Activated naive CD8-positive, alpha-beta T cell treated with anti-CD3 and anti-CD28 coated beads, Interleukin-2, amount 10 ng/mL, durations not matched to agents 7 days and 5 days (primary cell): ENCODE measurements at regions of chr11 and their contacts with region 1.

Region 1: DNA sequence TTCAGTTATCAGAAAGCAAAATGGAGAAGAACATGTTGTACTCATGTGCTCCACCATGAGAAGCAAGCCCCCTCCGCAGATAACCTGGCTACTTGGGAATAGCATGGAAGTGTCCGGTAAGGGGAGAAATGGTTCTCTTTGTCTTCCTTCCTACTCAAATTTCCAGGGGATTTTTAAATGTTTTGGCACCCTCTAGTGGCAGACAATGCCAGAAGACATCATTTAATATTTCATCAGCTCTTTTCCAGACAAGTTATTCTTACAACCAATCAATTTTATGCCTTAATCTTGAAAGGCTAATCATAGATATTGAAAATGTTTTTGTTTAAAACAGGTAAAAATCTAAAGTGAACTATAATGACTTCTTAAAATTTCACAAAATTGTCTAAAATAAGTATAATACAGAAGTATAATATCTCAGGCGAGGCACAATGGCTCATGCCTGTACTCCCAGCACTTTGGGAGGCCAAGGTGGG is 15.7 kb downstream of the CRTAM start:
- DNase-seq: no peak
- ATAC-seq: no peak
- H3K4me3 Mint-ChIP-seq: no peak overlapping the region
- H3K27ac Mint-ChIP-seq: no peak overlapping the region
- H3K4me1 Mint-ChIP-seq: peaks cover 44% of the 10 kb centered on the region
- H3K27me3 Mint-ChIP-seq: no peaks in the 10 kb centered on the region

Region 2: GRCh38 chr11:122690384-122690783 is 163.6 kb before region 1 on chr11:
- POLR2A ChIA-PET with region 1: no interaction called
- DNase-seq: no peak
- ATAC-seq: peak; percentile 37
- H3K4me3 Mint-ChIP-seq: peak overlapping the region; percentile 77
- H3K27ac Mint-ChIP-seq: peak overlapping the region; percentile 88
- H3K4me1 Mint-ChIP-seq: peaks cover 42% of the 10 kb centered on the region
- H3K27me3 Mint-ChIP-seq: no peaks in the 10 kb centered on the region

Region 3: GRCh38 chr11:122796128-122796717 is 57.8 kb before region 1 on chr11:
- POLR2A ChIA-PET with region 1: interaction called, 10 read pairs
- DNase-seq: peak; percentile 76
- ATAC-seq: peak; percentile 81
- H3K4me3 Mint-ChIP-seq: no peak overlapping the region
- H3K27ac Mint-ChIP-seq: peak overlapping the region; percentile 15
- H3K4me1 Mint-ChIP-seq: peaks cover 5% of the 10 kb centered on the region
- H3K27me3 Mint-ChIP-seq: no peaks in the 10 kb centered on the region

Region 4: GRCh38 chr11:122814401-122814800 is 39.6 kb before region 1 on chr11:
- POLR2A ChIA-PET with region 1: interaction called, 21 read pairs
- DNase-seq: no peak
- ATAC-seq: no peak
- H3K4me3 Mint-ChIP-seq: no peak overlapping the region
- H3K27ac Mint-ChIP-seq: no peak overlapping the region
- H3K4me1 Mint-ChIP-seq: peaks cover 19% of the 10 kb centered on the region
- H3K27me3 Mint-ChIP-seq: no peaks in the 10 kb centered on the region

Region 5: GRCh38 chr11:122837528-122838346 is 16.3 kb before region 1 on chr11:
- POLR2A ChIA-PET with region 1: interaction called, 52 read pairs
- DNase-seq: no peak
- ATAC-seq: no peak
- H3K4me3 Mint-ChIP-seq: peak overlapping the region; percentile 83
- H3K27ac Mint-ChIP-seq: peak overlapping the region; percentile 88
- H3K4me1 Mint-ChIP-seq: peaks cover 30% of the 10 kb centered on the region
- H3K27me3 Mint-ChIP-seq: peaks cover 3% of the 10 kb centered on the region

Region 6: DNA sequence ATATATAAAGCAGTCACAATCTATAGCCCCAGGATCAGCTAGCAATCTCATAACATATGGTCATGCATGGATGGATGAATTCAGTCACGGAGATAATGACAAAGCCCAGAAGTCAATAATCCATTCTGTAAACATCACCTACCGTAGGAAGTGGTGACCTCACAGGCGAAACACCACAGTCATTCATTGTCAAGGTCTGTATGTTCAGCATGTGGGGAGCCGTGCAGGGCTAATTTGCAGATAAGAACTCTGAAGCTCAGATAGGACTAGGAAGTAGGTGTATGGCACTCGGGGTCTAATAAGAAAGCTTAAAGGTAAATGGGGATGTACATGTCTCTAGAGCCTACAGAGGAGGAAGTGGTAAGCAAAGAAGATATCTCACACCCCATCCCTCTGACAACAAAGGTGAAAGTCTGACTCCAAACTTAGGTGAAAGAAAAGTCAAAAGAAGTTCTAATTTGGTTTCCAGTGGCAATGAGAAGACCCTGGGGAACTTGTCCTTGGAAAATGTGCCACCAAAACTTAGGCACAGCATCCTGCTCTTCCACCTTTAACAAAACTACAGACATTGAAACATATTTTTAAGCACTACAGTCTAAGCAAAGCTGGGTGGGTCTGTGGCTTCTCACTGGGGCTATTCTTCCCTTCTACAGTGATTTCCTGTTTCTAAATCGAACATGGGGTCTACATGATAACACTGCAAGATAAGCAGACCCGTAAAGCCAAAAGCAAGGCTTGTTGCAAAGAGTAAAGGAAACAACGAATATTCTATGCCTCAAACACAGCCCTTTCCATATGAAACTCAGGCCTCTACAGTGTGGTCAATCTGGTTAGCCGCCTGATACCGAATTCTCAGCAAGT is 10.5 kb before region 1 on chr11:
- POLR2A ChIA-PET with region 1: interaction called, 52 read pairs
- DNase-seq: peak; percentile 54
- ATAC-seq: peak; percentile 83
- H3K4me3 Mint-ChIP-seq: peak overlapping the region; percentile 69
- H3K27ac Mint-ChIP-seq: peak overlapping the region; percentile 94
- H3K4me1 Mint-ChIP-seq: peaks cover 60% of the 10 kb centered on the region
- H3K27me3 Mint-ChIP-seq: no peaks in the 10 kb centered on the region

Region 7: DNA sequence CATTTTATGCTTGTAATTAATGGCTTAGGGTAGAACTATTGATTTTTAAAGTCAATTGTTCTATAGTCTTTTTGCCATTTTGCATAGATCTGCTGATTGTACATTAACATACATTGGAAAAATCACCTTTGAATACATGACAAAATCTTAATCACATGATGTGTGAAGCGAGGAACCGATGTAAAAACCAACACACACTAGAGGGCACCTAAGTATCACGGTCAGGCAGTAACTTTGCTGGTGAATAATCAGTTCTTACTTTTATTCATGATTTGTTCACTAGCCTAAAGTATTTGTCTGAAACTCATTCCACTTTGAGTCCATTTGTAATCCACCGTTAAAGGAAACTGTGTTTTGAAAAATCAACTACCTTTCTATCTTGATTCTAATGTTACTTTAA is 56.8 kb after region 1 on chr11:
- POLR2A ChIA-PET with region 1: no interaction called
- DNase-seq: no peak
- ATAC-seq: no peak
- H3K4me3 Mint-ChIP-seq: no peak overlapping the region
- H3K27ac Mint-ChIP-seq: no peak overlapping the region
- H3K4me1 Mint-ChIP-seq: no peaks in the 10 kb centered on the region
- H3K27me3 Mint-ChIP-seq: no peaks in the 10 kb centered on the region